Heart right ventricle (tissue), 16 donors: ENCODE measurements at regions of chr17 and their contacts with region 1.

Region 1: GRCh38 chr17:82648166-82648668 is at the start of gene WDR45B:
- DNase-seq: peak; percentile 95 to 96
- ATAC-seq: peak; percentile 95 to 98 (median 98)
- H3K4me3 ChIP-seq: peak within 1 kb of the TSS; percentile 77 to 100 (median 99)
- H3K27ac ChIP-seq: peak within 1 kb of the TSS; percentile 91 to 99 (median 98)
- H3K4me1 ChIP-seq: peaks cover 2 to 37% (median 23%) of the 10 kb centered on the region in 9 donors
- H3K27me3 ChIP-seq: no peaks in the 10 kb centered on the region
- CTCF ChIP-seq: no peak
- total RNA-seq, gene WDR45B: 33.0 to 45.5 (median 39.7) TPM

Region 2: GRCh38 chr17:82603981-82604448 is 44.2 kb before region 1 on chr17:
- intact Hi-C with region 1: loop called in 2 of 10 experiments (anchors 5 kb)
- DNase-seq: peak in 1 of 2 donors; percentile 76
- ATAC-seq: peak; percentile 27 to 78 (median 63)
- H3K4me3 ChIP-seq: peak overlapping the region in 3 of 10 donors; percentile 9 to 29 (median 23)
- H3K27ac ChIP-seq: peak overlapping the region in 5 of 10 donors; percentile 28 to 63 (median 56)
- H3K4me1 ChIP-seq: peaks cover 4 to 52% (median 31%) of the 10 kb centered on the region in 9 donors
- H3K27me3 ChIP-seq: no peaks in the 10 kb centered on the region
- CTCF ChIP-seq: no peak

Region 3: GRCh38 chr17:82716203-82717010 is 68.2 kb after region 1 on chr17 and contains the start of gene FN3KRP:
- intact Hi-C with region 1: loop called in 1 of 10 experiments (anchors 5 kb)
- DNase-seq: peak; percentile 89 to 91
- ATAC-seq: peak; percentile 91 to 99 (median 97)
- H3K4me3 ChIP-seq: peak within 1 kb of the TSS; percentile 63 to 97 (median 94)
- H3K27ac ChIP-seq: peak within 1 kb of the TSS in 9 of 10 donors; percentile 39 to 87 (median 77)
- H3K4me1 ChIP-seq: peaks cover 3 to 21% (median 17%) of the 10 kb centered on the region in 9 donors
- H3K27me3 ChIP-seq: no peaks in the 10 kb centered on the region
- CTCF ChIP-seq: no peak
- total RNA-seq, gene FN3KRP: 10.3 to 18.7 (median 14.7) TPM

Region 4: DNA sequence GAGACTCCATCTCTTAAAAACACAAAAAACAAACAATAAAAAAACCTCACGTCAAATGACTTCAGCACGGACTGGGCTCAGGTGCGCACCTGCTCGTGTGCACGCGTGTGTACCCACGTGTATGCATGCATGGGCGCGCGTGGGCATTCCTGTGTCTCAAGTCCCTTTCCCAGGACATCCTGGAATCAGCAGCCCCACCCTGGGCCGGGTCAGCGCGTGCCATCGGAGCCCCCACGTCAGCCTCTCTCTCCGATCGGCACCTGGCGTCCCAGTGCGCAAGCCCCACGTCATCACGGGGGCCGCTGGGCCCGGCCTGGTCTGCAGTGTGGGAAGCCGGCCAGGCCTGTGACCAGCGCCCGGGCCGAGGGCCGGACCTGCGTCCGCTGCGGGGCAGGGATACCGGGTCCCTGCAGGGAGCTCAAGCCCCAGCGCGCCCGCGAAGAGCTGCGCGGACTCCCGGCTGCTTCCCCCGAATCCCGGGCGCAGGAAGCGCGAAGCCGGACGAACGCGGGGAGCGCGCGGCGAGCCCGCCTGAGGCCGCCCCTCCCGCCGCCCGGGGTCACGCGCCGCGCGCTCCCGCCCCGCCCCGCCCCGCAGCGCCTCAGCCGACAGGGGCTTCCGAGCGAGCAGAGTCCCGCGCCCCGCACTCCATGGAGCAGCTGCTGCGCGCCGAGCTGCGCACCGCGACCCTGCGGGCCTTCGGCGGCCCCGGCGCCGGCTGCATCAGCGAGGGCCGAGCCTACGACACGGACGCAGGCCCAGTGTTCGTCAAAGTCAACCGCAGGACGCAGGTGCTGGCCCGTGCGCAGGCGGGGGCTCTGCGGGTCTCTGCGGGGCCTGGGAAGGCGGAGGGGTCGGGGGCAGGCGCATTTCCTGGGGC is 87.0 kb after region 1 on chr17 and contains the start of gene FN3K:
- intact Hi-C with region 1: loop called in 1 of 10 experiments (anchors 5 kb)
- DNase-seq: peak; percentile 71 to 75
- ATAC-seq: peak; percentile 38 to 89 (median 60)
- H3K4me3 ChIP-seq: peak within 1 kb of the TSS; percentile 62 to 94 (median 81)
- H3K27ac ChIP-seq: peak within 1 kb of the TSS; percentile 76 to 96 (median 91)
- H3K4me1 ChIP-seq: peaks cover 0 to 37% (median 16%) of the 10 kb centered on the region in 9 donors
- H3K27me3 ChIP-seq: no peaks in the 10 kb centered on the region
- CTCF ChIP-seq: no peak
- total RNA-seq, gene FN3K: 72.4 to 115 (median 92.4) TPM